ENCODE measurements at regions of chr12 and their contacts with region 1.

Region 1: GRCh38 chr12:49288412-49288853 is 6.5 kb upstream of the PRPH start:
- ATAC-seq: peak in 3 of 8 experiments; percentile 21 to 71 (median 53)
- H3K4me3 ChIP-seq: no peak overlapping the region
- H3K27ac ChIP-seq: no peak overlapping the region
- H3K4me1 ChIP-seq: peaks cover 7 to 9% of the 10 kb centered on the region in 2 donors

Region 2: DNA sequence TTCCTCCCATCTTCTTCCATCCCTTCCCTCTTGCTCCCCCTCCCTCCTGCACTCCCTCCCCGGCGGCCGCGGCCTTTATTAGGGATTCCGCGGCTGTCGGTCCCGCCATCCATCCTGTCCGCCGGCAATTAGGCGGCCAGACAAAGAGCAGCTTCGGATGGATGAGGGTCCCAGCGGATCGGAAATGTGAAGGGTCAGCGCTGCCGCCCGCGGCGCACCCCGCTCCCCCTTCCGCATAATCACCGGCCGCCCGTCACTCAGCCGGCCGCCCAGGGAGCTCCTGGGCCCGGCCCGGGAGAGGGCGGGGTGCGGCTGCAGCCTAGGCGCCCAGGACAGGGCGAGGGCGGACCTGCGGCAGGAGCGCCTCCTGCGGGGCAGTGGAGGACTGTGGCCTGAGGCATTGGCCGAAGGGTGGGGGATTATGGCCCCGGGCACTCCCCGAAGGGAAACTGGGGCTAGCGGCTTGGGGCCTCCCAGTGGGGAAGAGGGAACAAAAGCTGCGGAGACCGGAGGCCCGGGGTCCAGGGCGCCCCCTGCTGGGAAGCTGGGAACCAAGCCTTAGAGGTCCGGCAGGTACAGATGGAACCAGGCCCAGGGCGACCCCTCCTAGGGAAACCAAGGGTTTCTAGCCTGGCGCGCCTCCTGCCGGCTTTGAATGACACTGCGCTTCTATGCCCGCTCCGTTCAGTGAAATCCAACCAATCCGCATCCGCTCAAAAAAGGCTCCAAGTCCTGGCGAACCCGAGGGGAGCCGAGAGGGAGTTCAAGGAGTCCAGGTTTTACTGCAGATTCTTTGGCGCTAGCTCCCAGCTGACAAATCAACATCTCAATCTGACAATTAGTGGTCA is 53.9 kb after region 1 on chr12:
- in situ Hi-C with region 1: loop called in 1 of 9 experiments (anchors 10 kb)
- ATAC-seq: peak; percentile 68 to 77 (median 72)
- H3K4me3 ChIP-seq: peak overlapping the region; percentile 14 to 38 (median 20)
- H3K27ac ChIP-seq: peak overlapping the region; percentile 70 to 86
- H3K4me1 ChIP-seq: peaks cover 85 to 89% of the 10 kb centered on the region in 2 donors

Measured in motor neuron (in vitro differentiated cells).